HEK293 (cell line): ENCODE measurements at regions of chr17 and their contacts with region 1.

Region 1: DNA sequence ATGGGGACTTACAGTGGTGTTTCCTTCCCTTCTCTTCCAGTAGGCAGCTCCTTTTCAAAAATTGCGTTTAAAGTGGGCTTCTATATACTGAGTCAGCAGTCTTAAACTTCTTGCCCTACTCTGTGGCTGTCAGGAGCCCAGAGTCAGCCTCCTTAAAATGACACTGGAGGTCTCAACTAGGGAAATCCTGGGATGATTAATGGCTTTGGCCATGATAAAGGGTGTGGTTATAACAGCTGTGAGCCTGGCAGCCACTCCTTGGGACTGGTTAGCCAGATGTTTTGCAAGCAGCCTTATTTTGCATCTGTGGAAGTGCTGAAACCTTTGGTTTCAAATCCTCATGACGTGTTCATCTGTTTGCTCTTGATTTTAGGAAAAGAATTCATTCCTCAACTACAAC is 25.0 kb downstream of the TAC4 start:
- H3K4me3 ChIP-seq: no peak overlapping the region
- H3K27ac ChIP-seq: no peak overlapping the region
- H3K4me1 ChIP-seq: no peaks in the 10 kb centered on the region
- CTCF ChIP-seq: no peak

Region 2: DNA sequence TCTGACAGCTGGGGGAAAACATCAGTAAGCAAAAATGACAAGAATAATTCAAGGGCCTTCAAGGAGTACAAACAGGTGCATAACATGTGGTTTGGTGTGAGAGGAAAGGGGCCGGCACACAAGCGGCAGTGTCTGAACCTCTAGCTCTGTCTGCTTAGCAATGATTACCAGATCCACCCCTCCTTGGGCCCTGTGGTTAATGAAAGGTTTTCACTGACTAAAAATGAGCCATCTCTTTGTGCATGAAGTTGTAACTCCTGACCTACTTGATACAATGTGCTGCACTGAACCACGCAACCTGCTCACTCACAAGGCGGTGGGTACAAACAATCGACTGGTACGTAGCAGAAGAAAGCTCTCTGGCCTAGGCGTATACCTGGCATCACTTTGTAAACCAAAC is 74.0 kb before region 1 on chr17:
- CTCF ChIA-PET with region 1: no interaction called
- POLR2A ChIA-PET with region 1: no interaction called
- H3K4me3 ChIP-seq: no peak overlapping the region
- H3K27ac ChIP-seq: no peak overlapping the region
- H3K4me1 ChIP-seq: no peaks in the 10 kb centered on the region
- CTCF ChIP-seq: no peak

Region 3: DNA sequence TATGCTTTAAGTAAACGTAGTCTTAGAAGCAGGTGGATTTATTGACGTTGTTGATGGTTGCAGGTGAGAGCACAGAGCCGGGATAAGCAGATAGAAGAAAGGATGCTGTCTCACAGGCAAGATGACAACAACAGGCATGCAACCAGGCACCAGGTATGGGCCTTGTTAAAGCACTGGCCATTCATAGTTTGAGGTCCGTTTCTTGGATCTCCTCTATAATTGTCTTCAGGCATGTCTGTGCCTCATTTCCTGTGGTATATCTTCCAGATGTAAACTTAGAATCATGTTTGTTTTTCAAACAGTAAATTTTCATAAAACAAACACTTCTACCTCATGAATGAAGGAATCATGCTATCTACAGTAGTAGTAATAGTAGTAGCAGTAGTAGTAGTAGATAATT is 13.8 kb before region 1 on chr17:
- CTCF ChIA-PET with region 1: no interaction called
- POLR2A ChIA-PET with region 1: no interaction called
- H3K4me3 ChIP-seq: no peak overlapping the region
- H3K27ac ChIP-seq: no peak overlapping the region
- H3K4me1 ChIP-seq: no peaks in the 10 kb centered on the region
- CTCF ChIP-seq: no peak

Region 4: GRCh38 chr17:49860113-49860512 is 37.3 kb after region 1 on chr17:
- CTCF ChIA-PET with region 1: no interaction called
- POLR2A ChIA-PET with region 1: no interaction called
- H3K4me3 ChIP-seq: no peak overlapping the region
- H3K27ac ChIP-seq: no peak overlapping the region
- H3K4me1 ChIP-seq: no peaks in the 10 kb centered on the region
- CTCF ChIP-seq: no peak

Region 5: DNA sequence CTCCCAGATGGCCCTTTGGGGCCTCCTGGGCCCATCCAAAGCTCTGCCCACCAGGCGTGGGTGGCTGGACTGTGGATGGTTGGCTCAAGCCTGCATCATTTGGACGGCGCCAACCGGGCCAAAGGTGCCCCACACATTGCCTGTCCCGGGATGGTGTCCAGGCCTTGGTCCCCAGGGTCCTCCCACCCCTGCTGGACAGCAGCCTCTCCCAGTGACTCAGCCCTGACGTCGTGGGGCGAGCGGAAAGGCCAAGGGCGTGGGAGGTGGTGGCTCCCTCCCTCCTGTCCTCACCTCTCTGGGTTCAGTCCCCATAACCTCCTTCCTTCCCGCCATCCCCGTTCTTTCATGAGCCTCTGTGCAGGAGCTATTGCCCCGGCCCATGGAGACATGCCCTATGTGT is 104.1 kb after region 1 on chr17:
- CTCF ChIA-PET with region 1: interaction called, 10 read pairs
- POLR2A ChIA-PET with region 1: no interaction called
- H3K4me3 ChIP-seq: no peak overlapping the region
- H3K27ac ChIP-seq: no peak overlapping the region
- H3K4me1 ChIP-seq: no peaks in the 10 kb centered on the region
- CTCF ChIP-seq: no peak